GM12878 (cell line): ENCODE measurements at regions of chr3 and their contacts with region 1.

Region 1: GRCh38 chr3:69051756-69052471 is at the start of gene TMF1:
- DNase-seq: peak; percentile 97
- ATAC-seq: peak; percentile 92
- H3K4me3 ChIP-seq: peak within 1 kb of the TSS; percentile 98
- H3K27ac ChIP-seq: peak within 1 kb of the TSS; percentile 73
- H3K4me1 ChIP-seq: peaks cover 3% of the 10 kb centered on the region; the same call in 1 of the 2 replicates
- H3K27me3 ChIP-seq: no peaks in the 10 kb centered on the region
- CTCF ChIP-seq: no peak
- EP300 ChIP-seq: no peak
- POLR2A ChIP-seq: peak; percentile 89
- RAD21 ChIP-seq: no peak
- polyA plus RNA-seq, gene TMF1: 7.1 to 7.9 TPM

Region 2: GRCh38 chr3:69065318-69065964 is 13.5 kb after region 1 on chr3:
- CTCF ChIA-PET with region 1: interaction called, 5 read pairs
- POLR2A ChIA-PET with region 1: interaction called, 4 read pairs
- RAD21 ChIA-PET with region 1: no interaction called
- SMC1A ChIA-PET with region 1: interaction called, 32 read pairs
- in situ Hi-C with region 1: no loop called
- intact Hi-C with region 1: no loop called
- DNase-seq: no peak
- ATAC-seq: no peak
- H3K4me3 ChIP-seq: no peak overlapping the region
- H3K27ac ChIP-seq: no peak overlapping the region
- H3K4me1 ChIP-seq: no peaks in the 10 kb centered on the region
- H3K27me3 ChIP-seq: no peaks in the 10 kb centered on the region
- CTCF ChIP-seq: no peak
- EP300 ChIP-seq: no peak
- POLR2A ChIP-seq: no peak
- RAD21 ChIP-seq: no peak

Region 3: DNA sequence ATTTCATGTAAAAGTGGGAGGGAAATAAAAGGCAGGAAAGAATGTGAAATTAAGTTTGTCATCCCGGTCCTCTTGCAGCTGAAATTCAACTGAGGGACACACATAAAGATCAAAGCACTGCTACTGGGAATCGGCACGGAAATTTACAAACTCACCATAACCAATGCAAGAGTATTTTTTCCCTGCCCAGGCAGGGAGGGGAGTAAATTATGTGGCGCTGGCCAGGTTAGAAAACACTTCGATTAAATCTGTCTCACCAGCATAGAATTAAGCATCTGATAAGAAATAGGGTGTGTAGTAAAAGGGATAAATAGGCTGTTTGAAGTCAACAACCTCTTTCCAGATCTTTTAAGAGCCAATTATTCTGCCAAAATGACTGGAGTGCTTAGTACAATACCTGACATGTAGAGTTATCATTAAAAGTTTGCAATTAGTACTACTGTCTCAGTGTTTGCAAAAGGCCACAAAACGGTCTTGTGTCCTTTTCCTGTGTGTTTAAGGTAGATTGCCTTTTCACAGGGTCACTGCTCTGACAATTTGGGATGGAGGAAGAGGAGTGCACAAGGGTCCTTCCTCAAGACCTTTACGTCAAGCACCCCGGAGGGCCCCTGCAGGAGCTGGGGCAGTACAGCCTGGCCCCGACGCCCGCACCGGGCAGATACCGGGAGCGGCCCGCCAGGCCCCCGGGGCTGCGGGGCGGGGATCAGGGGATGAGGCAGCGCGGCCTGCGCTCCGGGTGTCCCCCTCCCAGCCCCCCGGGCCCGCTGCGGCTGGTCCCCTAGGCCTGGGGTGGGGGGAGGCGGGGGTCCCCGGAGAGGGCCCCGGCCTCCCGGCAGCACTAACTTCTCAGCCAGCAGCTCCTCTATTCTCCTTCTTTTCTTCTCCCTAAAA is 27.6 kb after region 1 on chr3:
- CTCF ChIA-PET with region 1: interaction called, 7 read pairs
- POLR2A ChIA-PET with region 1: interaction called, 30 read pairs
- RAD21 ChIA-PET with region 1: interaction called, 152 read pairs
- SMC1A ChIA-PET with region 1: interaction called, 234 read pairs
- in situ Hi-C with region 1: no loop called
- intact Hi-C with region 1: loop called (anchors 2 kb)
- DNase-seq: no peak
- ATAC-seq: peak; percentile 25
- H3K4me3 ChIP-seq: peak overlapping the region; percentile 89
- H3K27ac ChIP-seq: peak overlapping the region; percentile 51
- H3K4me1 ChIP-seq: peaks cover 31% of the 10 kb centered on the region
- H3K27me3 ChIP-seq: no peaks in the 10 kb centered on the region
- CTCF ChIP-seq: no peak
- EP300 ChIP-seq: no peak
- POLR2A ChIP-seq: no peak
- RAD21 ChIP-seq: no peak

Region 4: GRCh38 chr3:69104996-69105719 is 53.2 kb after region 1 on chr3:
- CTCF ChIA-PET with region 1: no interaction called
- POLR2A ChIA-PET with region 1: no interaction called
- RAD21 ChIA-PET with region 1: interaction called, 4 read pairs
- SMC1A ChIA-PET with region 1: interaction called, 14 read pairs
- in situ Hi-C with region 1: no loop called
- intact Hi-C with region 1: no loop called
- DNase-seq: no peak
- ATAC-seq: no peak
- H3K4me3 ChIP-seq: no peak overlapping the region
- H3K27ac ChIP-seq: no peak overlapping the region
- H3K4me1 ChIP-seq: no peaks in the 10 kb centered on the region
- H3K27me3 ChIP-seq: no peaks in the 10 kb centered on the region
- CTCF ChIP-seq: no peak
- EP300 ChIP-seq: no peak
- POLR2A ChIP-seq: no peak
- RAD21 ChIP-seq: no peak